Sigmoid colon (tissue), 7 donors: ENCODE measurements at regions of chr9 and their contacts with region 1.

Region 1: DNA sequence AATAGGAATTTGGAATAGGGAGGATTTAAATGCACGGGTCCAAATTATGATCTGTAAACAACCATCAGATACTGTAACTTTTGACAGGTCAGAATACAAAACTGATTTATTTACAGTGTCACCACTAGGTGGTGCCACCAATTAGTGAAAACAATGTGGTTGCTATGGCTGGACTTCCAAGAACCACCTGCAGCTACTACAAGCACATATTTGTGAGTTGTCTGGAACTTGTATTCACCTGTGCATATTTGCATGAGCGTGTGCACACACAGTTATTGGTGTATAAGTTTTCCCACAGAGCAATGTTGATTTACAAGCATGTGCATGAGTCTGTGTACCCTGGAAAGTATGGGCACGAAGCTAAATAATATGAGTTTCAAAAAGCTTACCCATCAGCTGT is 3.0 kb upstream of the HRCT1 start:
- DNase-seq: no peak
- H3K4me3 ChIP-seq: no peak overlapping the region
- H3K27ac ChIP-seq: no peak overlapping the region
- H3K4me1 ChIP-seq: peaks cover 0 to 49% (median 43%) of the 10 kb centered on the region in 4 donors
- H3K27me3 ChIP-seq: no peaks in the 10 kb centered on the region
- CTCF ChIP-seq: peak; percentile 43 to 82 (median 61)
- EP300 ChIP-seq: no peak
- POLR2A ChIP-seq: no peak

Region 2: DNA sequence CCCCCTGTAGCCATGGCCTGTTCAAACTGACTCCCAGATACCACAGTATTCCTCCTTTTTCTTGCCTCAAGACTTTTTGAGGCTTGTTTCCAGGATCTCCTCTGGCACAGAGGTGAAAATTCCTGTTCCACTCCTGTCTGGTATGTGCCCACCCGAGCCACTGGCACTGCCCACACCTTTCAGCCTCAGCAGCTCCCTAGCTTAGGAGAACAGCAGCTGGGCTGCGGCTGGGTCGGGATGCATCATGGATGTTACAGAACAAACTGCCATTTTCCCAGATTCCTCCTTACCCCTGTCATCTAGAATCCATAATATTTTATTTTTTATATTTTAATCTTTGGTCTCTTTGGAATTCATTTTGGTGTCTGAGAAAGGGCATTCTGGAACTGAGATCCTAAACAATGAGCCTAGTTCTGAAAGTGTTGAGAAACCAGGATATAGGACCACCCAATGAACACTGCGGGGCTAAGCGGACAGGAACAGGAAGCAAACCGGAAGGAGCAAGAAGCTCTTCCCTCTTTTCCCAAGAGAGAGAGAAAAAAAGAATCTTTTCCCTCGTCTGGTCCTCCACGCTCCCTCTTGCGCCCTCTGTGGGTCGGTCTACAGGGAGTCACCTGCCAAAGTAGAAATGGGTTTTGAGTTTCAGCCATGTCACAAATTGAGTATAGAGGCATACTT is 42.4 kb after region 1 on chr9:
- intact Hi-C with region 1: loop called (anchors 1 kb)
- DNase-seq: peak; percentile 91
- H3K4me3 ChIP-seq: peak overlapping the region in 2 of 4 donors; percentile 2 to 22
- H3K27ac ChIP-seq: peak overlapping the region in 3 of 4 donors; percentile 3 to 32 (median 20)
- H3K4me1 ChIP-seq: peaks cover 0 to 5% (median 4%) of the 10 kb centered on the region in 4 donors
- H3K27me3 ChIP-seq: no peaks in the 10 kb centered on the region
- CTCF ChIP-seq: peak; percentile 71 to 85 (median 80)
- EP300 ChIP-seq: no peak
- POLR2A ChIP-seq: no peak

Region 3: DNA sequence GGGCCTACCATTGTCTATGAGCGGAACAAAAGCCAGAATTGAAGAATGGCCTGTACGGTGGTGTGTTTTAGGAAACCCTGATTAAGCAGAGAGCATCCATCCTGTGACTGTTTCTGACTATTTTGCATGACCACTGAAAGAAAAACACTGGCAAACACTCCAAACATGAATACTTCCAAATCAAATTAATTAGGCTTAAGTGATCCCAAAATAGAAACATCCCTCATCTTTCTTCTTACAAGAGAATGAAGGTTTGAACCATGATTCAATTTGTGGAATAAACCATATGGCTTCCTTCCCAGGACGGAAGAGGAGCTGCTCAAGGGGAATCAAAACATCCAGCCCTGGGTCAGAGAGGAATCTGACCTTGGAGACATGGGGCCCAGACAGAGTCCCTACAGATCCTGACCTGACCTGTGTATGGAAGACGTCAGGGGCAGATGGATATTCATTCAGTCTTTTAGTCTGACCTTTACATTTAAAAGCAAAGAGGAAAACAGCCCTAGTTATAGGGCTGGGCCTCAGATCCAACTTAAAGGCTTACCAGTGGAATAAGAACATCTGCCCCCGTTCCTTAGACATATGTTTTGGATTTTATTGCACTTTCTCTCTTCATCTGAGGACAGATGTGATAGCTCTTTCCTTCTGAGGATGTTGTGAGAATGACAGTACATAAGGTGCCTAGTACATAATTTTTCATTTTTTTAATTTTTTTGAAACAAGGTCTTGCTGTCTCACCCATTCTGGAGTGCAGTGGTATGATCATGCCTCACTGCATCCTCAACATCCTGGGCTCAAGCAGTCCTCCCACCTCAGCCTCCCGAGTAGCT is 116.1 kb after region 1 on chr9:
- intact Hi-C with region 1: no loop called
- DNase-seq: no peak
- H3K4me3 ChIP-seq: no peak overlapping the region
- H3K27ac ChIP-seq: peak overlapping the region in 1 of 4 donors; percentile 24
- H3K4me1 ChIP-seq: no peaks in the 10 kb centered on the region
- H3K27me3 ChIP-seq: no peaks in the 10 kb centered on the region
- CTCF ChIP-seq: no peak
- EP300 ChIP-seq: no peak
- POLR2A ChIP-seq: no peak